Activated CD4-positive, alpha-beta T cell treated with anti-CD3 and anti-CD28 coated beads, Interleukin-2, amount 10 ng/mL, durations not matched to agents 7 days and 5 days (primary cell): ENCODE measurements at regions of chr9 and their contacts with region 1.

Region 1: GRCh38 chr9:129946246-129946995 is 96.6 kb downstream of the FNBP1 start:
- DNase-seq: no peak
- H3K4me3 Mint-ChIP-seq: peak overlapping the region; percentile 18
- H3K27ac Mint-ChIP-seq: peak overlapping the region; percentile 85
- H3K4me1 Mint-ChIP-seq: peaks cover 64% of the 10 kb centered on the region
- H3K27me3 Mint-ChIP-seq: no peaks in the 10 kb centered on the region

Region 2: GRCh38 chr9:129958796-129959195 is 12.4 kb after region 1 on chr9:
- CTCF ChIA-PET with region 1: interaction called, 12 read pairs
- POLR2A ChIA-PET with region 1: no interaction called
- DNase-seq: no peak
- H3K4me3 Mint-ChIP-seq: no peak overlapping the region
- H3K27ac Mint-ChIP-seq: no peak overlapping the region
- H3K4me1 Mint-ChIP-seq: peaks cover 71% of the 10 kb centered on the region
- H3K27me3 Mint-ChIP-seq: no peaks in the 10 kb centered on the region